Endothelial cell of umbilical vein (primary cell): ENCODE measurements at regions of chr17 and their contacts with region 1.

Region 1: DNA sequence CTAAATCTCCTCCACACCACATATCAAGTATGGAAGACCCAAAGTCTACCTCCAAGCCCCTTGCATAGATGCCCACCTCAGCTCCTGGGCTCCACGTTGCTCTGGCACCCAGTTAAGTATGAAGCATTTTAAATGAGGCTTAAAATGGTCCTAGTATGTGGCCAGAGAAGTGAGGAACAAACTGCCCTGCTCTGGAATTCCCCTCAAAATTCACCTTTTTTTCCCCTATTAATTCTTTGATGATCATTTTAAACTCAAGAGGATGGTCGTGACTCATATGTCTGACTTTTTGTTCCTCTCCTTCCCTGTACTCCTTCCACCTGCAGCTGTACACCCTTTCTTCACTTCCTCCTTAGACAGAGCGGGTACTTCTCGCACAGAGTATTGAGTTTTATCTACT is 234.5 kb upstream of the MYOCD start:
- DNase-seq: no peak
- H3K4me3 ChIP-seq: no peak overlapping the region
- H3K27ac ChIP-seq: no peak overlapping the region
- H3K4me1 ChIP-seq: no peaks in the 10 kb centered on the region
- H3K27me3 ChIP-seq: no peaks in the 10 kb centered on the region
- CTCF ChIP-seq: no peak
- POLR2A ChIP-seq: no peak

Region 2: GRCh38 chr17:12395733-12396354 is 35.3 kb before region 1 on chr17:
- CTCF ChIA-PET with region 1: no interaction called
- POLR2A ChIA-PET with region 1: no interaction called
- dilution Hi-C with region 1: no loop called
- intact Hi-C with region 1: loop called (anchors 1 kb)
- DNase-seq: no peak
- H3K4me3 ChIP-seq: no peak overlapping the region
- H3K27ac ChIP-seq: no peak overlapping the region
- H3K4me1 ChIP-seq: no peaks in the 10 kb centered on the region
- H3K27me3 ChIP-seq: no peaks in the 10 kb centered on the region
- CTCF ChIP-seq: peak in 1 of 2 donors; percentile 11
- POLR2A ChIP-seq: no peak

Region 3: DNA sequence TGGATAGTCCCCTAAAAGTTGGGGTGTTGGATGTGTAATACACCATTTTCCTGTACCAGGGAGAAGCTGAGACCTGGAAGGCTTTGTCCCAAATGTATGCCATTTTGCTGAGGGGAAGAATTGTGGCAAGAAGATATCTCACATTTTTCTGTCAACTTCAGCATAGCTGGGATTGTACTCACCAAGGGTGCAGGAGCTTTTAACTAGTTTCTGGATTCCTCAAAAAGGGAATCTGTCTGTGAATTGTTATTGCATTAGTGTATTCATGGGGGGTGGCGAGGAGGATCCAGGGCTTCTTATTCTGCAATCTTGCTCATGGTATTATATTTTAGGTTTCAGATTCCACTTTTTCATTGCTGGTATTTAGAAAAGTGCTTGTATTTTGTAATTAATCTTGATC is 26.3 kb after region 1 on chr17:
- CTCF ChIA-PET with region 1: no interaction called
- POLR2A ChIA-PET with region 1: no interaction called
- dilution Hi-C with region 1: no loop called
- intact Hi-C with region 1: no loop called
- DNase-seq: no peak
- H3K4me3 ChIP-seq: no peak overlapping the region
- H3K27ac ChIP-seq: no peak overlapping the region
- H3K4me1 ChIP-seq: no peaks in the 10 kb centered on the region
- H3K27me3 ChIP-seq: no peaks in the 10 kb centered on the region
- CTCF ChIP-seq: no peak
- POLR2A ChIP-seq: no peak